Prostate gland (tissue), 2 donors: ENCODE measurements at regions of chr5 and their contacts with region 1.

Region 1: GRCh38 chr5:112419986-112420864 is 1.1 kb upstream of the EPB41L4A start:
- DNase-seq: peak; percentile 87
- H3K4me3 ChIP-seq: peak overlapping the region; percentile 82 to 83
- H3K27ac ChIP-seq: peak overlapping the region; percentile 76 to 83
- H3K4me1 ChIP-seq: no peaks in the 10 kb centered on the region
- H3K27me3 ChIP-seq: no peaks in the 10 kb centered on the region
- CTCF ChIP-seq: peak; percentile 62 to 96 (median 91)
- POLR2A ChIP-seq: peak; percentile 6

Region 2: DNA sequence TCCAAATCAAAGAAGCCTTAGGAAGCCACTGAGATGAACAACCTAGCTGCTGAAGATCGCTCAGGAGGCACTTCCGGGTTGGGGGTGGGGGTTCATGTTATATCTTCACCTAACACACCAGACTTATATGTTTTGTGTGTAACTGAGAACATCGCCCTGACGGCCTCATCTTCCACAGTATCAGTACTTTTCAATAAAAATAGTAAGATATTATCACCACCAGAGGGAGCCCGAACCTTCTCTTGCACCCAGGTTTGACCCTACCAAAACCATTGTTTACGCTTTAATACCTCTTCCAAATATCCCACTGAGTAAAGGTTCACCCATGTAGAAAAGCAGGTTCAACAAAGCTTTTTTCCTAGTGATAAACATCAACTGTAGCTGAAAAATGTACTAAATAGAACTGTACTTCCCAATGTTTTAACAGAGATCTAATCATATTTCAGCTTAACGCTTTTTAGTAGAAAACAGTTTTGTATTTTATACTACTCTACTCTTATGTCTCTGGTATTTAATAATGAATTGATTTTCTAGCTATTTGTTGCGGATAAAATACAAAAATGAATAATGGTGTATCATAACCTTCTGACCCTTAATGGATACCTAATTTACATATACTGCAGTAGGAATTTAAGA is 245.1 kb before region 1 on chr5:
- intact Hi-C with region 1: loop called (anchors 2 kb)
- DNase-seq: peak; percentile 53
- H3K4me3 ChIP-seq: no peak overlapping the region
- H3K27ac ChIP-seq: no peak overlapping the region
- H3K4me1 ChIP-seq: no peaks in the 10 kb centered on the region
- H3K27me3 ChIP-seq: no peaks in the 10 kb centered on the region
- CTCF ChIP-seq: peak in 3 of 4 experiments; percentile 59 to 70 (median 67)
- POLR2A ChIP-seq: no peak

Region 3: DNA sequence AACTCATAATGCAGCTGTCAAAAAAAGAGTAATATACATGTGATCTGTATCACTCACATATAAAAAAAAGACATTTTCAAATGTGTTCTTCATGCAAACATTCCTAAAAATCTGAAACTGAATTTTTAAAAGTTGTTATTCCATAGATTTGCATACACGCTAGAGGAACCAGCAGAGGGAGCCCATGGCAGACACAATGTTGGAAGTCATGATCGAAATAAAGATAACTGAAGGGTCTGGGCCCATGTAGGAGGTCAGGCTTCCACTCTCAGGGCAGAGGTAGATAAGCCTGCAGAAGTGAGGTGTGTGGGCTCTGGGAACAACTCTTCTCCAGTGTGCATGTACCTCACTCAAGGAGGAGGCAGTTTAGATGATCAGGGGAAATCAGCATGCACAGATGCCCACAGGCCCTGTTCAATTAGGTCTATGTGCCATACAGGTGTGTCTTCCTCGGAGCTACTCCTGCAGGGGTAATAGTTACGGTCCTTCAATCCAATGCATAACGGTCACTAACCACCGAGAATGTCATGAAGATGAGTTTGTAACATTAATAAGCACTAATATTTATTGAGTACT is 209.7 kb before region 1 on chr5:
- intact Hi-C with region 1: loop called (anchors 1 kb)
- DNase-seq: peak; percentile 41
- H3K4me3 ChIP-seq: no peak overlapping the region
- H3K27ac ChIP-seq: no peak overlapping the region
- H3K4me1 ChIP-seq: no peaks in the 10 kb centered on the region
- H3K27me3 ChIP-seq: no peaks in the 10 kb centered on the region
- CTCF ChIP-seq: peak in 3 of 4 experiments; percentile 59 to 76 (median 70)
- POLR2A ChIP-seq: no peak

Region 4: DNA sequence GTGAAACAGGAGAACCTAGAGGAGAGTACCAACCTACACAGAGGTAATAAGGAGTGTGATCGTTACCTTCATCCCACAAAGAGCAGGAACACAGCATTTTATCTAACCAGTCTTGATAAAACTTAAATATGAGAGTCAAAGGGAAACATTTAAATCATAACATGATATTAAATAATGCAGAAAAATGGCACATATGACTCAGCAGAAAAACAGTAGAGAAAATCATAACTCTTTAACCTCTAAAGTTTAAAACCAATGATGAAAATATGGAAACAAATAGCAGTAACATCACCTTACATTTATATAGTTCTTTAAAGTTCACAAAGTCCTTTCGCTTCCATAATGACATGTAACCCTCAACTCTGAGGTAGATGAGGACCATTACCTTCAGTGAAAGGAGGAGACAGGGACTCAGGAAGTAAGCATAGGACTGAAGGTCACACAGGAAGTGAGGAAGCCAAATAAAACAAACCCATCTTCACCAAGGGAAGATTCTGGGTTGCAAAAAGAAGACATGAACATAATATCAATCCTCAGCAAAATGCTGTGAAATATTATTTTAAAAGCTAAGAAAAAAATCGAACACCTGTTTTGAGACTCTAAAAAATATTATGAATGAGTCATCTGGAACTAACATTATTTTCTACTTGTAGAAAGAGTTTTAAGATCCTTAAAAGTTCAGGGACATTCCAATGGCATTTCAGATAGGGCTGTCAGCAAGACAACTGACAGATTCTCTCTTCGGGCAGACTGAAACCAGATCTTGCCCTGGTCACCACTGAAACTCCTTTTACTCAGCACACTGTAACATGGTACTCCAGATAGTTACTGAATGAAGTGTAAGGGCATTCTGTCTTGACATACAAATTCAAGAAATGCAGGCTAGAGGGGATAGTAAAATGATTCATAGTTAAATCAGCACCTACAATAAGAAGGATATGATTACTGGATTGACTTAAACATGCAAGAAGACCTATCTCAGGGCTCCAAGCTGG is 149.6 kb before region 1 on chr5:
- intact Hi-C with region 1: no loop called
- DNase-seq: no peak
- H3K4me3 ChIP-seq: no peak overlapping the region
- H3K27ac ChIP-seq: no peak overlapping the region
- H3K4me1 ChIP-seq: no peaks in the 10 kb centered on the region
- H3K27me3 ChIP-seq: no peaks in the 10 kb centered on the region
- CTCF ChIP-seq: no peak
- POLR2A ChIP-seq: no peak

Region 5: GRCh38 chr5:112757468-112758208 is 337.4 kb after region 1 on chr5:
- intact Hi-C with region 1: loop called (anchors 5 kb)
- DNase-seq: peak; percentile 25
- H3K4me3 ChIP-seq: no peak overlapping the region
- H3K27ac ChIP-seq: no peak overlapping the region
- H3K4me1 ChIP-seq: no peaks in the 10 kb centered on the region
- H3K27me3 ChIP-seq: no peaks in the 10 kb centered on the region
- CTCF ChIP-seq: peak; percentile 30 to 87 (median 77)
- POLR2A ChIP-seq: no peak